ENCODE measurements at regions of chr1 and their contacts with region 1.

Region 1: DNA sequence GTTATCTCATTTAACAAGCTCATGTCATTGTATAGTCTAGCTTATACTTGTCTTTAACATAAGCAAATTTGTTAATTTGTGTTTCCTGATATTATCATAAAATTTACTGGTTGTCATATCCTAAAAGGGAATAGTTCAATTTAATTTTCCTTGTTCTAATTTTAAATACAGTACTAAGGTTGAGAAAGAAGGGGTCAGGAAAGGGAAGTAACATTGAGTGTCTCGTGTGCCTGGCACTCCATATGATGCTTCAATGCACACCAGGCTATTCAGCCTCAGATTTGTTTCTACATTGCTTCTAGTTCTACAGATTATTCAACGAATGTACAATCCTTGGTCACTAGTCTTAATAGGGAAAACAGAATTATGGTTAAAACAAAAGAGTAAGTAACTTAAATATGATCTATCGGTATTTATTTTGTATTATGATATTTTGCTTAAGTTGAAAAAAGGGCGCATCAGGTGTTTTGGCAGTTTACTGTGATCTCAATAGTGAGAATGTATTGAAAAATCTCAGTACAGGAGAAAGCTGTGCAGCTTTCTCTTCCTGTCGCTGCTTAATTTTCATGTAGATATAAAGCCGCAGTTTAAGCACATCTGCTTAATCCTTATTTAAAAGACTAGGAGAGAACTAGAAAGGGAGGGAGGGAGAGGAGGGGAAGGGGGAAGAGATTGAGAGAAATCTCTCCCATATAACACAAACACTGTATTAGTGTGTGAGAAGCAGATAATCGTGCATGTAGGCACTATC is 13.0 kb downstream of the PTPRC start:
- DNase-seq: no peak
- ATAC-seq: peak; percentile 69
- H3K4me3 Mint-ChIP-seq: peak overlapping the region; percentile 68
- H3K27ac Mint-ChIP-seq: peak overlapping the region; percentile 90
- H3K4me1 Mint-ChIP-seq: peaks cover 83% of the 10 kb centered on the region
- H3K27me3 Mint-ChIP-seq: no peaks in the 10 kb centered on the region
- CTCF ChIP-seq: no peak

Region 2: DNA sequence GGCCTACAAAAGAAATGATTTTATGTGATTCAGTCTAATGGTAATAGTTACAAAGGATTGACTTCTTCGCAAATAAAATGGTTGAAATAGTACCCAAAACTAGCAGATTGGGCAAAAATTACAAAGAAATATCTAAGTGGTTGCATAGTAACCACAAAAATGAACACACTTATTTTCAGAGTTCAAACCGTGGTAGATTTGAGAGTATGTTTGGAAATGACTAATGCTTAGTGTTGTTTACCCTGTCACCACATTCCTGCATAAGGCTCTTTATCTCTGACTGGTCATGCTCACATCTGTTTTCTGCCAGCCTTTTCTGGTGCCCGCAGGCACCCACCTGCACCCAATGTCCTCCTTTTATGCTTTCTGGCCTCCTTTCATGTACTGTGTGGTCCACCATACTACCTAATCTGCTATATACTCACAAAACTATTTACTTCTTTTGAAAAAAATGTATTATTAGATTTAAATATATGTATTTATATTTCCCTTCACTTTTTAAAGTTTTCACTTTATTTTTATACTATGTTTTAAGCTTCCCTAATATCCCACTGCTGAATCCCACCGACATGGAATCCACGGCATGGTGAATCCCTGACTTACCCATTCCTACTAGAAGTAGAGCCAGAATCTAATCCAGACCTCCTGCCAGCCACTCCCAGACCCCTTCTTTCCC is 17.3 kb after region 1 on chr1:
- CTCF ChIA-PET with region 1: no interaction called
- POLR2A ChIA-PET with region 1: interaction called, 28 read pairs
- intact Hi-C with region 1: loop called (anchors 1 kb)
- DNase-seq: no peak
- ATAC-seq: peak; percentile 57
- H3K4me3 Mint-ChIP-seq: peak overlapping the region; percentile 42
- H3K27ac Mint-ChIP-seq: peak overlapping the region; percentile 88
- H3K4me1 Mint-ChIP-seq: peaks cover 89% of the 10 kb centered on the region
- H3K27me3 Mint-ChIP-seq: no peaks in the 10 kb centered on the region
- CTCF ChIP-seq: no peak

Region 3: DNA sequence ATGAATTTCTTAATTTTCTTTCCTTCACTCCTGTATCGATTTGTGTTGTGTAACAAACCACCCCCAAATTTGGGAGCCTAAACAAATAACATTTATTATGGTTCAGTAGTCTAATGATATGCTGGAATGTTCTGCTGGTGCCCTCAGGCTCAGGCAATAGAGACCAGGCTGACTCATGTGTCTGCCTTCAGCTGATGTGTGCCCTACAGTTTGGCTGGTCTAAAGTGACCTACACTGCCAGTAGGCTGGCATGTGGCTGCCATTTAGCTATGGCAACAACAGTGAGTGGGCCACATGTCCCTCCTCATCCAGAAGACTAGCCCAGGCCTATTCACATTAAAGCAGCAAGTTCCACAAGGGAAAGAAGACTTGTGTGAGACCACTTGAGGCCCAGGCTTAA is 102.8 kb after region 1 on chr1:
- CTCF ChIA-PET with region 1: no interaction called
- POLR2A ChIA-PET with region 1: no interaction called
- intact Hi-C with region 1: no loop called
- DNase-seq: no peak
- ATAC-seq: no peak
- H3K4me3 Mint-ChIP-seq: no peak overlapping the region
- H3K27ac Mint-ChIP-seq: peak overlapping the region; percentile 77
- H3K4me1 Mint-ChIP-seq: peaks cover 19% of the 10 kb centered on the region
- H3K27me3 Mint-ChIP-seq: no peaks in the 10 kb centered on the region
- CTCF ChIP-seq: no peak

Measured in activated B cell treated with CpG ODN at 0.5 μM for 24 hours (primary cell).